ENCODE measurements at regions of chr1 and their contacts with region 1.

Region 1: GRCh38 chr1:61851849-61852669 is 109.8 kb downstream of the PATJ start:
- H3K4me3 ChIP-seq: no peak overlapping the region
- H3K27ac ChIP-seq: no peak overlapping the region
- H3K4me1 ChIP-seq: 0 out of 2 replicates have a peak, but pooled peaks cover 3% of the 10 kb centered on the region
- CTCF ChIP-seq: peak; percentile 29; the same call in 1 of the 2 replicates

Region 2: GRCh38 chr1:61588736-61589672 is 263.1 kb before region 1 on chr1:
- CTCF ChIA-PET with region 1: interaction called, 10 read pairs
- POLR2A ChIA-PET with region 1: no interaction called
- H3K4me3 ChIP-seq: no peak overlapping the region
- H3K27ac ChIP-seq: no peak overlapping the region
- H3K4me1 ChIP-seq: no peaks in the 10 kb centered on the region
- CTCF ChIP-seq: peak; percentile 82

Region 3: DNA sequence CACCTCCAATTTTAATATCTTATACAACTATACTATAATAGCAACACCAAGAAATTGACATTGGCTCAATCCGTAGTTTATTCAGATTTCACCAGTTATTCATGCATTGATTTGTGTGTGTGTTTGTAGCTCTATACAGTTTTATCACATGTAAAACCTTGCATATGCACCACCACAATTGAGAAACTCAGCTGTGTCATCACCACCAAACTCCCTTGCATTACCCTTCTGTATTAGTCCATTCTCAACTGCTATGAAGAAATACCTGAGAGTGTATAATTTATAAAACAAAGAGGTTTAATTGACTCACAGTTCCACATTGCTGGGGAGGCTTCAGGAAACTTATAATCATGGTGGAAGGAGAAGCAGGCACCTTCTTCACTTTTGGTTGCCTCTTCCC is 52.3 kb after region 1 on chr1:
- CTCF ChIA-PET with region 1: no interaction called
- POLR2A ChIA-PET with region 1: no interaction called
- H3K4me3 ChIP-seq: no peak overlapping the region
- H3K27ac ChIP-seq: no peak overlapping the region
- H3K4me1 ChIP-seq: no peaks in the 10 kb centered on the region
- CTCF ChIP-seq: no peak

Region 4: GRCh38 chr1:62038594-62039284 is 186.7 kb after region 1 on chr1:
- CTCF ChIA-PET with region 1: no interaction called
- POLR2A ChIA-PET with region 1: no interaction called
- H3K4me3 ChIP-seq: no peak overlapping the region
- H3K27ac ChIP-seq: no peak overlapping the region
- H3K4me1 ChIP-seq: 0 out of 2 replicates have a peak, but pooled peaks cover 3% of the 10 kb centered on the region
- CTCF ChIP-seq: no peak